Endothelial cell of umbilical vein (primary cell): ENCODE measurements at regions of chr2 and their contacts with region 1.

Region 1: DNA sequence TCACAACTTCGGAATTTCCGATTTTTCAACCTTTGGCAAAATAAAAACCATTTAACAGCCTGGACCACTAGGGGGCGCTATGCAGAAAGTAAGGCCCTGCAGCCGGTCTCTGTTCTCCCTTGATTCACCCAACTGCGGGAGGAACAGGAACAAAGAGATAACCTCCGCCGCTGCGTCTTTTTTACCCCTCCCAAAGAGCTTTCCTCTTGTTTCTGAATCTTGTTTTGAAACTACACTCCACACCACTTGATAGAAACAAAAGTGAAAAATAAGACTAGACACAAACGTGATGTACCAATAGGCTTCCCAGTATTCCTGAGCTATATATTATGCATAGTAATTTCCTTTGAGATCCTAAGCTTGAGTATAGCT is 231.2 kb downstream of the MYO3B start:
- DNase-seq: peak; percentile 70
- H3K4me3 ChIP-seq: no peak overlapping the region
- H3K27ac ChIP-seq: no peak overlapping the region
- H3K4me1 ChIP-seq: peaks cover 3% of the 10 kb centered on the region
- H3K27me3 ChIP-seq: peaks cover 10 to 30% of the 10 kb centered on the region in 2 experiments
- CTCF ChIP-seq: peak; percentile 77 to 89
- POLR2A ChIP-seq: no peak

Region 2: GRCh38 chr2:170340693-170341068 is 68.5 kb before region 1 on chr2:
- CTCF ChIA-PET with region 1: no interaction called
- POLR2A ChIA-PET with region 1: no interaction called
- dilution Hi-C with region 1: no loop called
- intact Hi-C with region 1: no loop called
- DNase-seq: no peak
- H3K4me3 ChIP-seq: no peak overlapping the region
- H3K27ac ChIP-seq: no peak overlapping the region
- H3K4me1 ChIP-seq: no peaks in the 10 kb centered on the region
- H3K27me3 ChIP-seq: peaks cover 11 to 15% of the 10 kb centered on the region in 2 experiments
- CTCF ChIP-seq: no peak
- POLR2A ChIP-seq: no peak

Region 3: DNA sequence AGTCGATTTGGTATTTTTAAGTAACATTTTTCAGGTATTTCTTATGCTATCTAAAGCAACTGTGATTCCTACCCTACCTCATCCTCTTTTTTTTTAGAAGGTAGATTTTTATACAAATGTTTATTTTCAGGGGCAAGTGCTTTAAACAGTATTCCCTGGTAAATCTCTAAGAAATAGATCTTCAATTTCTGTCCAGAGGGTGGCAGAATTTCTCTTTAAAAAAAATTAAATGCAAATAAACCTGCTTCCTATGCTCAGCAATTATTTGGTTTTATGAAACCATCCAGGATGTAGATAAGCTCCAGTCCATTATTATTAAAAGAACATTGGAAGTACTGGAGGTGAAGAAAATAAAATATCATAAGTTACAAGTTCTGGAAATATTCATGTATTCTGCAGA is 39.3 kb before region 1 on chr2:
- CTCF ChIA-PET with region 1: interaction called, 10 read pairs
- POLR2A ChIA-PET with region 1: no interaction called
- dilution Hi-C with region 1: no loop called
- intact Hi-C with region 1: no loop called
- DNase-seq: peak; percentile 42
- H3K4me3 ChIP-seq: no peak overlapping the region
- H3K27ac ChIP-seq: no peak overlapping the region
- H3K4me1 ChIP-seq: no peaks in the 10 kb centered on the region
- H3K27me3 ChIP-seq: peaks cover 45 to 58% of the 10 kb centered on the region in 2 experiments
- CTCF ChIP-seq: no peak
- POLR2A ChIP-seq: no peak

Region 4: GRCh38 chr2:170396799-170397459 is 12.2 kb before region 1 on chr2:
- CTCF ChIA-PET with region 1: interaction called, 24 read pairs
- POLR2A ChIA-PET with region 1: interaction called, 3 read pairs
- dilution Hi-C with region 1: no loop called
- intact Hi-C with region 1: no loop called
- DNase-seq: peak; percentile 25
- H3K4me3 ChIP-seq: no peak overlapping the region
- H3K27ac ChIP-seq: no peak overlapping the region
- H3K4me1 ChIP-seq: no peaks in the 10 kb centered on the region
- H3K27me3 ChIP-seq: peaks cover 4 to 11% of the 10 kb centered on the region in 2 experiments
- CTCF ChIP-seq: no peak
- POLR2A ChIP-seq: no peak

Region 5: DNA sequence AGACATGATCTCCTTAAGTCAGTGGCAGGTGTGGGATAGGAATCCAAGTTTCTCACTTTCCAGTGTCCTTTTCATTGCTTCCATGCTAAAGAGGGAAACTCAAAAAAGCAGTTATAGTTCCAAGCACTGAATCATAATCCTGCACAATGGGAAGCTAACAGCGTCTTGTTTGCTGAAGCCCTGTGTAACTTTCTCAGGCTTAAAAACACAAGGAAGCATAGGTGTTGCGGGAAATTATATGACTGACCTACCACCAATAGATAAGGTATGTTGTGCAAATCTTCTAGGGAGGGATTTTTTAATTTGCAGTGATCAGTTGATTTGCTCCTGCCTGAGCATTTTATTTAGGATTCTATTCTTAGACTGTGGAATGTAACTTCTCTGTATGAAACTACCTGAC is 19.7 kb after region 1 on chr2:
- CTCF ChIA-PET with region 1: interaction called, 11 read pairs
- POLR2A ChIA-PET with region 1: no interaction called
- dilution Hi-C with region 1: no loop called
- intact Hi-C with region 1: no loop called
- DNase-seq: no peak
- H3K4me3 ChIP-seq: no peak overlapping the region
- H3K27ac ChIP-seq: no peak overlapping the region
- H3K4me1 ChIP-seq: no peaks in the 10 kb centered on the region
- H3K27me3 ChIP-seq: peaks cover 1 to 12% of the 10 kb centered on the region in 2 experiments
- CTCF ChIP-seq: no peak
- POLR2A ChIP-seq: no peak

Region 6: GRCh38 chr2:170455617-170456426 is 46.7 kb after region 1 on chr2:
- CTCF ChIA-PET with region 1: no interaction called
- POLR2A ChIA-PET with region 1: no interaction called
- dilution Hi-C with region 1: no loop called
- intact Hi-C with region 1: no loop called
- DNase-seq: peak; percentile 34
- H3K4me3 ChIP-seq: no peak overlapping the region
- H3K27ac ChIP-seq: no peak overlapping the region
- H3K4me1 ChIP-seq: no peaks in the 10 kb centered on the region
- H3K27me3 ChIP-seq: peaks cover 0 to 2% of the 10 kb centered on the region in 2 experiments
- CTCF ChIP-seq: no peak
- POLR2A ChIP-seq: no peak

Region 7: GRCh38 chr2:170680172-170680941 is 271.2 kb after region 1 on chr2:
- CTCF ChIA-PET with region 1: interaction called, 12 read pairs
- POLR2A ChIA-PET with region 1: no interaction called
- dilution Hi-C with region 1: no loop called
- intact Hi-C with region 1: no loop called
- DNase-seq: no peak
- H3K4me3 ChIP-seq: no peak overlapping the region
- H3K27ac ChIP-seq: no peak overlapping the region
- H3K4me1 ChIP-seq: no peaks in the 10 kb centered on the region
- H3K27me3 ChIP-seq: no peaks in the 10 kb centered on the region
- CTCF ChIP-seq: no peak
- POLR2A ChIP-seq: no peak